ENCODE measurements at regions of chr5 and their contacts with region 1.

Region 1: GRCh38 chr5:32076699-32077695 is 97.1 kb downstream of the GOLPH3 start:
- DNase-seq: peak; percentile 61
- H3K4me3 ChIP-seq: no peak overlapping the region
- H3K27ac ChIP-seq: no peak overlapping the region
- H3K4me1 ChIP-seq: no peaks in the 10 kb centered on the region; a peak in 1 of 4 replicates
- H3K27me3 ChIP-seq: no peaks in the 10 kb centered on the region
- CTCF ChIP-seq: peak; percentile 93
- EP300 ChIP-seq: no peak
- RAD21 ChIP-seq: peak; percentile 96

Region 2: DNA sequence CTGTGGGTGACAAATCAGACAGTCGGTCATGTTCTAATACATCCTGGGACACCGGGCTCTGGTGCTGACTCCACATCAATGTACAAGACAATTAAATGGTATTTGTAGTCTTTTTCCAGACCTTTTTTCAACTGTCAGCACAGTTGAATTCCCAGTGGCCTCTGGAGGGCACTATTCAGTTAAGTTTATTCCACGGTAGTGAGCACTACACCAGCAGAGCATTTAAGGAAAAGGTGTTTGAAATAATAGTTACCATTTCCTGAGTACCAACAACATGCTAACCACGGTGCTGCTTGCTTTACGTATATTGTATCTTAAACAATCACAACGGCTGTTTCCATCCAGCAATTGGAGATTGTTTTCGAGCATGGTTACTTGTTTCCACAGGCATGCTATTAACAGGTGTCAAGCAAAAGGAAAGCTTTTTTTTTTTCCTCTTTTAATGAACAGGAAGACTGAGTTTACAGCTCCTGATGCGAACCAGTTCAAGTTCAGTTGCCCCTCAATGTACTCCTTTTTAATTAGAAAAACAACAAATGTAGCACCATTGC is 251.4 kb before region 1 on chr5:
- CTCF ChIA-PET with region 1: interaction called, 195 read pairs
- POLR2A ChIA-PET with region 1: interaction called, 5 read pairs
- DNase-seq: peak; percentile 56
- H3K4me3 ChIP-seq: no peak overlapping the region
- H3K27ac ChIP-seq: no peak overlapping the region
- H3K4me1 ChIP-seq: peaks cover 0 to 7% of the 10 kb centered on the region in 2 experiments; a peak in 1 of 4 replicates
- H3K27me3 ChIP-seq: no peaks in the 10 kb centered on the region; the same call in 1 of the 2 replicates
- CTCF ChIP-seq: peak; percentile 75
- EP300 ChIP-seq: no peak
- RAD21 ChIP-seq: peak; percentile 93

Region 3: DNA sequence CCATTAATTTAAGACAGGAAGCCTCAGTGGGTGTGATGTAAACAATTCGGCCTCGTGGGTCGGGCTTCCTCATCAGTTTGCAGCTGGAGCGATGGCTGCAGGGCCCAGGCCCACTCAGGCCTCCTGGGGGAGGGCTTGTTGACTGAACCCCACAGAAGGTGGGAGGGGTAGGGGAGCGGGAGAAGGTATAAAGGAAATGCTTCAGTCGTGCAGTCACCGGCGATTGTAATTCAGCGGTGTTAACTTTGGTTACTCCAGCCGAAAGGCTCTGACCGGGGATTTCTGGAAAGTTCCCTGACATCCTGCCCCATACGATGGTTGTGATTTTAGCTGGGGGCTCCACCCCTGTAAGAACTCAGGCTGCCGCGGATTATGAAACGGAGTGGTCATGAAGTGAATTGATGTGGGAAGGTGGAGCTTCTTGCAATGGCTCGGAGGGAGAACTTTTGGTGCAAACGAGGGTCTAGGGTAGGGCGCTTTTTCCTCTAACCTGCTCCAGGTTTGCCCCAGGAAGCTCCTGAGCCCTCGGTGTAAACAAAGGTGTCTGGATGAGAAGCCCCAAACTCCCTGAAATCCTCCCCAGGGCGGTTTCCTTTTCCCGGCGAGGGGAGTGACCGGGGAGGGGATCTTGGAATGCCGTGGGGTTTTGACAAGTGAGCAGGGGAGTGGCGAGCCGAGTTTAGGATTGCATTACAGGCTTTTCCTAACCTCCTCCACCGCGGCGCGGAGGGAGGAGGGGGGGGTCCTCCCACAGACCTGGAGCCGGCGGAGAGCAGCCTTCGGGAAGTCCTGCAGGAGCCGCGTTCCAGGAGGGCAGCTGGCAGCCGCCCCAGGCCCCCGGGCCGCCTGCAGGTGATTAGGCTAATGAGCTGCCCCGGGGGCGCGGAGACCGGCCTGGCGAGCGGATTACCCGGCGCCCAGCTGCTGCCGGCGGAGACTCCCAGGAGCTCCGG is 222.5 kb before region 1 on chr5:
- CTCF ChIA-PET with region 1: interaction called, 24 read pairs
- POLR2A ChIA-PET with region 1: no interaction called
- DNase-seq: peak; percentile 72
- H3K4me3 ChIP-seq: peak overlapping the region; percentile 27 to 37; a peak in 3 of 4 replicates
- H3K27ac ChIP-seq: no peak overlapping the region
- H3K4me1 ChIP-seq: peaks cover 0 to 17% of the 10 kb centered on the region in 2 experiments; a peak in 1 of 4 replicates
- H3K27me3 ChIP-seq: peaks cover 24% of the 10 kb centered on the region; the same call in 1 of the 2 replicates
- CTCF ChIP-seq: no peak
- EP300 ChIP-seq: peak in 1 of 2 experiments; percentile 39; a peak in 1 of 4 replicates
- RAD21 ChIP-seq: no peak

Region 4: DNA sequence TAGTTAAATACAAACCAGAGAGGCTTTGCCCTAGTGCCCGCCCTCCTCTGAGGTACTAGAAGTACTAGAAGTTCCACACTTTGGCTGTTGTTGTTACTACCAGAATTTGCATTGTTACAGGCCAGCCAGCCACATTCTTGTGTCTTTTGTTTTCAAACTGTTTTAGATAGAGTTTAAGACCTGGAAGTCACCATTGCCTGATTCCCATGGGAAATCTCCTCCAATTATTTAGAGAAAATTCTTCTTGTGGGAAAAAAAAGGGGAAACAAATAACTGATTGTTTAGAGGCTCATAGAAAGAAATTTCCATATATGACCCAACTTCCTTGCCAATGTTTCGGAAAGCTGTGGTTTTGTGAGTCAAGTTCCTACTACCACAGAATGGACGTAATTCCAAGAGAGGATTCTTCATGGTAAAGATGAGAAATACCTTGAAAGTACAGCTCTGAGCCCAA is 155.1 kb before region 1 on chr5:
- CTCF ChIA-PET with region 1: interaction called, 31 read pairs
- POLR2A ChIA-PET with region 1: no interaction called
- DNase-seq: no peak
- H3K4me3 ChIP-seq: no peak overlapping the region
- H3K27ac ChIP-seq: no peak overlapping the region
- H3K4me1 ChIP-seq: peaks cover 0 to 6% of the 10 kb centered on the region in 2 experiments; a peak in 1 of 4 replicates
- H3K27me3 ChIP-seq: no peaks in the 10 kb centered on the region; the same call in 1 of the 2 replicates
- CTCF ChIP-seq: no peak
- EP300 ChIP-seq: no peak
- RAD21 ChIP-seq: no peak

Region 5: DNA sequence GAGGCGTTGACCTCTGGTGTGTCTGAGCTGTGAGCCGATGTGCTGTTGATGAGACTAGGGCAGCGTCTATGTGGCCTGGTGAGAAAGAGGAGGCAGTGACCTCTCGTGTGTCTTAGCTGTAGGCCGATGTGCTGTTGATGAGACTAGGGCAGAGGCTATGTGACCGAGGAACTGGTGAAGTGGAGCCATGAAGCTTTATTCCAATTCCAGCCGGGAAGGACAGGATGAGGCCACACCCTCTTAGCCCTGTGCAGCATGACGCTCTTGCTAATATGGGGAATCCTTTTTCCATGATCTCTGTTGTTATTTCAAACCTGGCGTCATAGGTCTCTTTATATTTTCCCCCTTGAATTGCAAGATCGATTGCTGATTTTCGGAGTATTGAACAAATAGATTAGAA is 75.3 kb before region 1 on chr5:
- CTCF ChIA-PET with region 1: no interaction called
- POLR2A ChIA-PET with region 1: no interaction called
- DNase-seq: no peak
- H3K4me3 ChIP-seq: no peak overlapping the region
- H3K27ac ChIP-seq: no peak overlapping the region
- H3K4me1 ChIP-seq: no peaks in the 10 kb centered on the region
- H3K27me3 ChIP-seq: 0 out of 2 replicates have a peak, but pooled peaks cover 5% of the 10 kb centered on the region
- CTCF ChIP-seq: no peak
- EP300 ChIP-seq: no peak
- RAD21 ChIP-seq: no peak

Region 6: DNA sequence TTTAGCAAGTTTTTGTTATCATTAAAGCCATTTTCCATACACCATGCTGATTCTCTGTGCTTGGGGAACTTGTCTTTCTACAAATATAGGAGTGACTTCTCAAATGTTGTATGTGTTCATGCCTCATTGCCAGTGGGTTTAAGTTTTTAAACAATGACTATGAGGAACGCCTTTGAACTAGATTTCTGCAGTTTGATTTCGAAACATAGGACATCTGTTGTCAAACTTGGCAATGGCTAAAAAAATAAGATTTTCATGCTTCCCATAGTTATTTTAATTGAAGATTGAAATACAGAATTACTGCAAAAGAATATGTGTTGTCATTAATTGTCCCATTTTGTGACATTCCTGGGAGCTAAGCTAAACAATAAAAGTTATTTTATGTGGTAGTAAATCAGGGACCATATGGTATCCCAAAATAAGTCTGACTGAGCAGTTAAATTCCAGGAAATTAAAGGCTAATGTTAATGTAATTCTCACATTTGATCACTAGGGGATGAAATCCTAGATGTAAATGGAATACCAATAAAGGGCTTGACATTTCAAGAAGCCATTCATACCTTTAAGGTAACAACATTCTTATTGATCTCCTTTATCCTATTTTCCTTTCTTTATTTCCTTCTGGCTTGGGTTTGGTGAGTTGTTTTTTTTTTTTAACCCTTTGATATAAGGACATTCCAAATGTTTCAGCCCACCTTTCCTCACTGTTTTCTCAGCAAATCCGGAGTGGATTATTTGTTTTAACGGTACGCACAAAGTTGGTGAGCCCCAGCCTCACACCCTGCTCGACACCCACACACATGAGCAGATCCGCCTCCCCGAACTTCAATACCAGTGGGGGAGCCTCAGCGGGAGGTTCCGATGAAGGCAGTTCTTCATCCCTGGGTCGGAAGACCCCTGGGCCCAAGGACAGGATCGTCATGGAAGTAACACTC is 19.6 kb before region 1 on chr5:
- CTCF ChIA-PET with region 1: interaction called, 29 read pairs
- POLR2A ChIA-PET with region 1: no interaction called
- DNase-seq: no peak
- H3K4me3 ChIP-seq: no peak overlapping the region; a peak in 1 of 4 replicates
- H3K27ac ChIP-seq: no peak overlapping the region
- H3K4me1 ChIP-seq: peaks cover 0 to 4% of the 10 kb centered on the region in 2 experiments; a peak in 1 of 4 replicates
- H3K27me3 ChIP-seq: peaks cover 7% of the 10 kb centered on the region; the same call in 1 of the 2 replicates
- CTCF ChIP-seq: peak; percentile 47
- EP300 ChIP-seq: no peak
- RAD21 ChIP-seq: no peak

Region 7: GRCh38 chr5:32092938-32093812 is 16.2 kb after region 1 on chr5:
- CTCF ChIA-PET with region 1: interaction called, 24 read pairs
- POLR2A ChIA-PET with region 1: no interaction called
- DNase-seq: peak; percentile 81
- H3K4me3 ChIP-seq: peak overlapping the region in 1 of 2 experiments; percentile 50; a peak in 1 of 4 replicates
- H3K27ac ChIP-seq: no peak overlapping the region
- H3K4me1 ChIP-seq: peaks cover 0 to 4% of the 10 kb centered on the region in 2 experiments; a peak in 1 of 4 replicates
- H3K27me3 ChIP-seq: no peaks in the 10 kb centered on the region
- CTCF ChIP-seq: peak; percentile 77
- EP300 ChIP-seq: no peak
- RAD21 ChIP-seq: peak; percentile 89

Measured in SK-N-SH (cell line).